Posterior vena cava (tissue), 2 donors: ENCODE measurements at regions of chr10 and their contacts with region 1.

Region 1: GRCh38 chr10:8079716-8080115 is 25.2 kb downstream of the GATA3 start:
- DNase-seq: no peak

Region 2: GRCh38 chr10:8102708-8103401 is 23.1 kb after region 1 on chr10:
- intact Hi-C with region 1: loop called in 1 of 2 experiments (anchors 1 kb)
- DNase-seq: no peak